ENCODE measurements at regions of chr5 and their contacts with region 1.

Region 1: DNA sequence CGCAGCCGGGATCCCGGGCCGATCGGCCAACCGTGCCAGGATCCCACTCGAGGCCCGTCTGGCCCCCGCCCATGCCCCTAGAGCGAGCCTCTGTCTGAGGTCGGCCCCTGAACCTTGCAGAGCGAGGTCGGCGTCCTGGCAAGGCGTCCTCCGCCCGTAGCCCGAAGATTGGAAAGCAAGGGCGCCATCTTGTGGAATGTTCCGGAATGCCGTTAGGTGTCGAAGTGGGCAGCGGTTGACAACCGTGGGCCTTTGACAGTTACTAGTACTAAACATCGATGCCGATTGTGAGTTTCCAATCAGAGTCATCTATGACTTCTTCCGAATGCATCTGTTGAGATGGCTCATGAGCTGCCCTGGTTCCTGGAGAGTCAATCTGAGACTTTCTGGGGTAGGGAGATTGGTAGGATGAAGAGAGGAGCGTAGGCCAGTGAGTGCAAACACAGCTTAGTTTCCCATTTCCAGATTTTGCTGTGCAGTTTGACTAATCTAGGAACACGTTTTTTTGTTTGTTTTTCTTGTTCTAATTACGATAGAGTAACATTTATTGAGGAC is 923 bp upstream of the PLK2 start:
- DNase-seq: peak; percentile 92
- ATAC-seq: peak; percentile 88 to 93
- H3K4me3 ChIP-seq: peak overlapping the region; percentile 78
- H3K27ac ChIP-seq: peak overlapping the region; percentile 96
- H3K4me1 ChIP-seq: peaks cover 18% of the 10 kb centered on the region
- H3K27me3 ChIP-seq: no peaks in the 10 kb centered on the region
- CTCF ChIP-seq: peak; percentile 76

Region 2: DNA sequence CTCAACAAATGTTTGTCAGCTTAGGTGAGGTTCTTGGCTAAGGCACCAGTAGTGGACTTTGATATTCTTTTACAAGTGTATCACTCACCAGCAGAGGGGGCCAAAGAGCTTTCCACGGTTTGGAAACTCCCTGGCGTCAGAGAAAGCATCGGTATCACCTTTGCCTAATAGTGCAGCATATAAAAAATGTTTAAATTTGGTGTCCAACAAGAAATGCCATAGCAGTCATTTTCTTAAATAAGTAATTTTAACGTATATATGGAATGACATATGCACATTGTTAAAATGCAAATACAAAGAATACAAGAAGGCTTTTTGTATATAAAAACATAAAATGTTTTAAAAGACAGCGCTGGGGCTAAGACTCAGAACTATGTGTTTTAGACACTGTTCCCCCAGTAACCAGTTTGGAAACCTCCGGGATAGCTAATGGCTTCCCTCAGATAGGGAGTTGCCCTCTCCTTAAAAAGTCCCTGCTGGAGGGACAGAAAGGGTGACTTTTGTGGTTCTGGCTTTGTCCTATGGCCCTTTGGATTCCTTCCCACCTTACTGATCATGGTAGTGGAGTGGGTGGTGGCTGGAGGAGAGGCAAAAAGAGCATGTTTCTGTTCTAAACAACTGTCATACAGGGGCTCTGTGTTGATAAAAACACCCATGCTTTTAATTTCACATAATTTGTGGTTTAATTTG is 1162.4 kb before region 1 on chr5:
- intact Hi-C with region 1: loop called (anchors 5 kb)
- DNase-seq: peak; percentile 60
- ATAC-seq: peak; percentile 91 to 96
- H3K4me3 ChIP-seq: peak overlapping the region; percentile 27
- H3K27ac ChIP-seq: no peak overlapping the region
- H3K4me1 ChIP-seq: peaks cover 11% of the 10 kb centered on the region
- H3K27me3 ChIP-seq: no peaks in the 10 kb centered on the region
- CTCF ChIP-seq: peak; percentile 77

Region 3: GRCh38 chr5:57887851-57888621 is 572.8 kb before region 1 on chr5:
- intact Hi-C with region 1: loop called (anchors 10 kb)
- DNase-seq: no peak
- ATAC-seq: peak; percentile 74 to 90
- H3K4me3 ChIP-seq: no peak overlapping the region
- H3K27ac ChIP-seq: no peak overlapping the region
- H3K4me1 ChIP-seq: no peaks in the 10 kb centered on the region
- H3K27me3 ChIP-seq: no peaks in the 10 kb centered on the region
- CTCF ChIP-seq: peak; percentile 67

Measured in lower lobe of right lung (tissue), 2 donors.